AG04450 (cell line): ENCODE measurements at regions of chr18 and their contacts with region 1.

Region 1: GRCh38 chr18:31977270-31977872 is 34.4 kb upstream of the TRAPPC8 start:
- DNase-seq: peak; percentile 27
- H3K4me3 ChIP-seq: no peak overlapping the region
- H3K27ac ChIP-seq: no peak overlapping the region
- H3K27me3 ChIP-seq: no peaks in the 10 kb centered on the region
- CTCF ChIP-seq: peak; percentile 81

Region 2: DNA sequence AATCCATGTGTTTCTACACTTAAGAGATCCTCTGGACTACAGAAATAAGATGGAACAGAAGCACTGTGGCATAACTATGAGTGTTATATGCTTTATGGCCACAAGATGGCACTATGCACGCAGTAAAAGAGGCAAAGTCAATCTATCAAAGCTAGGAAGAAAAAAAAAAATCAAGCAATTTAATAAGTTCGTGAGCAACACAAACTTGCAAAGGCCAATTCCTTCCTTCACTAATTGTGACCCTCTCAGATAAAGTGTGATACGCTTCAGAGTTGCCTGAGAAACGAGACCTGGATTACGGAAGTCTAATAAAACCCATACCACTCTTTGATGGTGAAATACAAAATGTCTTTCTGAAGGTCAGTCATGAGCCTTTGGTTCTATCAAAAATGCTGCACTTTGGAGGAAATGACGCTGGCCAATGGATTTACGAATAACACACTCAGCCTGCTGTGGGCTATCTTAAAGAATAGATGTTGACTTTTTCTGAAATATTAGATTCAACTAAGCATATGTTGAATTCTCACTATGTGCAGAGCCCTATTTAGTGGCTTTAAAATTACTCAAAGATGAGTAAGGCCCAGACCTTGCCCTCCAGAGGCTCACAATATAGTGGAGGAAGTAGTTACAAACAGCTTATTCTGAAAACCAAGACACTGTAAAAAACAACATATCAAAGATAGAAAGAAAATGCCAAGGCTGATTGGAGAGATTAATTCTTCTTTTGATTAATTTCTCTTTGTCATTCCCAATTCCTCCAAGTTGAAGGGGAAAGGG is 421.2 kb before region 1 on chr18:
- CTCF ChIA-PET with region 1: interaction called, 14 read pairs
- POLR2A ChIA-PET with region 1: no interaction called
- DNase-seq: peak; percentile 16
- H3K4me3 ChIP-seq: no peak overlapping the region
- H3K27ac ChIP-seq: no peak overlapping the region
- H3K27me3 ChIP-seq: no peaks in the 10 kb centered on the region
- CTCF ChIP-seq: peak; percentile 81

Region 3: DNA sequence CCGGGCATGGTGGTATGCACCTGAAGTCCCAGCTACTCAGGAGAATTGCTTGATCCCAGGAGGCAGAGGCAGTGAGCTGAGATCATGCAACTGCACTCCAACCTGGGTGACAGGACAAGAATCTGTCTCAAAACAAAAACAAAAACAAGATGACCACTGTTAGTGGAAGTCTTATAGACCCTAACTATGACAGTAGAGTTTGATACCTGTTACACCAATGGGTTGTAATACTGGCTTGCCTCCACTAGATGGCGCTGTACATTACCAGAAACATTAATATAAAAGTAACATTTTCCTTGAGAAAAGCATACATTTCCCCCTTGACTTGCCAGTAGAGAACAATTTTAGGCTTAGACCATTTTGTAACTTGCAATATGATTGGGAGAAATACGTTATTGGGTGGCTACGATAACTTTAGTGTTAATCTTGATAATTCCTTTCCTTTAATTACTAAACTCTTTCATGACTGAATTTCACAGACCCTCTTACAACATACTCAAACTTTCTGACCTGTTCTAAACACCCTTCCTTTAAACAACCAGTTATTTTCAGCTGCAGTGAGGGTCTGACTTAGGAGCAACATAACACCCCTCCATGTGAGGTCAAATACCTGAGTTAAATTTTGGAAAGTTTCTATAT is 236.2 kb before region 1 on chr18:
- CTCF ChIA-PET with region 1: interaction called, 14 read pairs
- POLR2A ChIA-PET with region 1: no interaction called
- DNase-seq: peak; percentile 2
- H3K4me3 ChIP-seq: no peak overlapping the region
- H3K27ac ChIP-seq: no peak overlapping the region
- H3K27me3 ChIP-seq: no peaks in the 10 kb centered on the region
- CTCF ChIP-seq: peak; percentile 82

Region 4: GRCh38 chr18:31801078-31801477 is 176.3 kb before region 1 on chr18:
- CTCF ChIA-PET with region 1: no interaction called
- POLR2A ChIA-PET with region 1: no interaction called
- DNase-seq: no peak
- H3K4me3 ChIP-seq: no peak overlapping the region
- H3K27ac ChIP-seq: no peak overlapping the region
- H3K27me3 ChIP-seq: no peaks in the 10 kb centered on the region
- CTCF ChIP-seq: no peak

Region 5: GRCh38 chr18:31819106-31819924 is 158.1 kb before region 1 on chr18:
- CTCF ChIA-PET with region 1: interaction called, 11 read pairs
- POLR2A ChIA-PET with region 1: no interaction called
- DNase-seq: peak; percentile 1
- H3K4me3 ChIP-seq: no peak overlapping the region
- H3K27ac ChIP-seq: no peak overlapping the region
- H3K27me3 ChIP-seq: peaks cover 2% of the 10 kb centered on the region
- CTCF ChIP-seq: peak; percentile 81

Region 6: GRCh38 chr18:31990823-31991222 is 13.5 kb after region 1 on chr18:
- CTCF ChIA-PET with region 1: interaction called, 23 read pairs
- POLR2A ChIA-PET with region 1: no interaction called
- DNase-seq: no peak
- H3K4me3 ChIP-seq: no peak overlapping the region
- H3K27ac ChIP-seq: no peak overlapping the region
- H3K27me3 ChIP-seq: no peaks in the 10 kb centered on the region
- CTCF ChIP-seq: no peak

Region 7: DNA sequence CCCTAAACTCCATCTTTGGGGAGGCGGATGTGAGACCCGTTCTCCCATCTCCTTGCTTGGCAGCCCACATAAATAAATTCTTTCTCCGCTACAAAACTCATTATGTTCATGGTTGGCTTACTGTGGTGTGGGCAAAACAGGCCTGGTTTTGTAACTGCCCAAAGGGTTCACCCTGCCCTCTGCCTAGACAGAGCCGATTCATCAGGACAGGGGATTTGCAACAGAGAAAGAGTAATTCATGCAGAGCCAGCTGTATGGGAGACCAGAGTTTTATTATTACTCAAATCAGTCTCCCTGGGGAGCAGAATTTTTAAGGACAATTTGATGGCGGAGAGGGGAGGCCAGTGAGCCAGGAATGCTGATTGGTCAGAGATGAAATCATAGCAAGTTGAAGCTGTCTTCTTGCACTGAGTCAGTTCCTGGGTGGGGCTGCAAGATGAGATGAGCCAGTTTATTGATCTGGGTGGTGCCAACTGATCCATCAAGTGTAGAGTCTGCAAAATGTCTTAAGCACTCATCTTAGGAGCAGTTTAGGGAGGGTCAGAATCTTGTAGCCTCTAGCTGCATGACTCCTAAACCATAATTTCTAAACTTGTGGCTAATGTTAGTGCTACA is 32.9 kb after region 1 on chr18:
- CTCF ChIA-PET with region 1: no interaction called
- POLR2A ChIA-PET with region 1: no interaction called
- DNase-seq: no peak
- H3K4me3 ChIP-seq: no peak overlapping the region
- H3K27ac ChIP-seq: no peak overlapping the region
- H3K27me3 ChIP-seq: no peaks in the 10 kb centered on the region
- CTCF ChIP-seq: no peak